GM13976 (cell line): ENCODE measurements at regions of chr10 and their contacts with region 1.

Region 1: DNA sequence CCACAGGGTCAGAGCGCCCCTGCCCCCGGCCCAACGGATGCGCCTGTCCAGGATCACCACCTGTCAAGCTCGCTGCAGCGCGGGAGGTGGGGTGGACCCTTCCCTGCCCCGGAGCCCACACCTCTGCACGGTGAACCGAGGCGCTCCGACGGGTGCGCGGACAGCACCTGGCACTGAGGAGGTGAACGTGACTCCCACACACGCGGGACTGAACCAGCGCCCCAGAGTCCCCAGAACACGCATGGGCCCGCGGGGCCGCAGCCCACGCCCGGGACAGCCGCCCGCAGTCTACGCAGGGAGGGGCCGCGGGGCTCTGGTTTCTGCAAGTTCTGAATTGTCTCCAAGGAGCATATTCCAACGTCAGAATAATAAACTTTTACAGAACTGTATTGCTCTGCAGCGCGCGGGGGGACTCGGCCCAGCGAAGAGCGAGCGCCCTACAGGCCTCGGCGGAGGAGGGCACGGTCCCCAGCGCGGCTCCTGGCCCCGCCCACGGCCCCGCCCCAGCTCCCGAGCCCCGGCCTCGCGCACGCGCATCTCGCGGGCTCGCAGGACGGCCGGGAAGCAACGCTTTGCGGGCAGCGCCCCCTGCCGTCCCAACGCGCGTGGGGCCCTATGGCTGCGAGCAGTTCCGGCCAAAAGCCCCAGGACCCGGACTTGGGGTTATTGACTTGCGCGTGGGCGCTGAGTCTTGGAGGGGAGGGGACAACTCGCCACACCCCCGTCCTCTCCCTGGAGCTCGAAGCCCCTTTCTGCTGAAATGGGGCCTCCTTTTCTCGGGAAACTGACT is 29.7 kb downstream of the OAT start:
- DNase-seq: peak; percentile 99
- CTCF ChIP-seq: peak; percentile 98

Region 2: GRCh38 chr10:123582084-123582989 is 806.7 kb before region 1 on chr10:
- in situ Hi-C with region 1: loop called (anchors 25 kb)
- DNase-seq: peak; percentile 82
- CTCF ChIP-seq: peak; percentile 68

Region 3: GRCh38 chr10:123994417-123995081 is 394.5 kb before region 1 on chr10:
- in situ Hi-C with region 1: loop called (anchors 5 kb)
- DNase-seq: peak; percentile 93
- CTCF ChIP-seq: peak; percentile 98